Right cardiac atrium (tissue), 5 donors: ENCODE measurements at regions of chr1 and their contacts with region 1.

Region 1: GRCh38 chr1:70896224-70896623 is 151.4 kb downstream of the PTGER3 start:
- DNase-seq: no peak
- ATAC-seq: no peak
- H3K4me3 ChIP-seq: no peak overlapping the region
- H3K27ac ChIP-seq: no peak overlapping the region
- H3K4me1 ChIP-seq: no peaks in the 10 kb centered on the region
- H3K27me3 ChIP-seq: no peaks in the 10 kb centered on the region

Region 2: DNA sequence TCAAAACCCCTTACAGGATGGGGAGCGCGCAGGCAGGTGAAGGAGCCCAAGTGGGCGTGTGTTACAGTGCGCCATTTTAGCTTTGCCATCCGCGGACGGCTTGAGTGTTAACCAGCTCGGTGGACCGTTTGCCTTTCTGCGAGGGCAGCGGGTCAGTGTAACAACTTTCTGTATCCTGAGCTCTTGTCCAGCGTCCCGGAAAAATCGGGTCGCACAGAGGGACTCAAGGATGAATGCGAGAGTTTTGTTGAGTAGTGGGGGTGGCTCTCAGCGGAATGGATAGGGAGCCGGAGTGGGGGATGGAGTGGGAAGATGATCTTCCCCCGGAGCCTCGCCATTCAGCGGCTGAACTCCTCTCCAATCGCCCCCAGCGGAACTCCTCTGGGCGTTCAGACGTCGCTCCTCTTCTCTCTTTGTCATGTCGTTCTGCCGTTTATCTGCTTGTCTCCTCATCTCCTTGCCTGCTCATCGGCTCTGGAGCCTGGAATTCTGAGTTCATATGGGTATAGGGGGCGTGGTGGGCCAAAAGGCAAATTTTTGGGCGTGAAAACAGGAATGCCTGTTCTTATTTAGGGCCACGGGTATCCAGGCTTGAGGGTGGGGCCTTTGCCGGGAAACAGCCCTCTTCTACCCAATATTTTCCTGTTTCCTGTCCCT is 189.7 kb before region 1 on chr1:
- intact Hi-C with region 1: loop called in 1 of 4 experiments (anchors 10 kb)
- DNase-seq: peak; percentile 21 to 66 (median 37)
- ATAC-seq: peak; percentile 51 to 63
- H3K4me3 ChIP-seq: peak overlapping the region; percentile 37
- H3K27ac ChIP-seq: no peak overlapping the region
- H3K4me1 ChIP-seq: peaks cover 2% of the 10 kb centered on the region
- H3K27me3 ChIP-seq: no peaks in the 10 kb centered on the region

Region 3: GRCh38 chr1:70966018-70966638 is 69.9 kb after region 1 on chr1:
- intact Hi-C with region 1: no loop called
- DNase-seq: no peak
- ATAC-seq: no peak
- H3K4me3 ChIP-seq: no peak overlapping the region
- H3K27ac ChIP-seq: no peak overlapping the region
- H3K4me1 ChIP-seq: no peaks in the 10 kb centered on the region
- H3K27me3 ChIP-seq: no peaks in the 10 kb centered on the region